CD4-positive, alpha-beta memory T cell (primary cell): ENCODE measurements at regions of chr21 and their contacts with region 1.

Region 1: DNA sequence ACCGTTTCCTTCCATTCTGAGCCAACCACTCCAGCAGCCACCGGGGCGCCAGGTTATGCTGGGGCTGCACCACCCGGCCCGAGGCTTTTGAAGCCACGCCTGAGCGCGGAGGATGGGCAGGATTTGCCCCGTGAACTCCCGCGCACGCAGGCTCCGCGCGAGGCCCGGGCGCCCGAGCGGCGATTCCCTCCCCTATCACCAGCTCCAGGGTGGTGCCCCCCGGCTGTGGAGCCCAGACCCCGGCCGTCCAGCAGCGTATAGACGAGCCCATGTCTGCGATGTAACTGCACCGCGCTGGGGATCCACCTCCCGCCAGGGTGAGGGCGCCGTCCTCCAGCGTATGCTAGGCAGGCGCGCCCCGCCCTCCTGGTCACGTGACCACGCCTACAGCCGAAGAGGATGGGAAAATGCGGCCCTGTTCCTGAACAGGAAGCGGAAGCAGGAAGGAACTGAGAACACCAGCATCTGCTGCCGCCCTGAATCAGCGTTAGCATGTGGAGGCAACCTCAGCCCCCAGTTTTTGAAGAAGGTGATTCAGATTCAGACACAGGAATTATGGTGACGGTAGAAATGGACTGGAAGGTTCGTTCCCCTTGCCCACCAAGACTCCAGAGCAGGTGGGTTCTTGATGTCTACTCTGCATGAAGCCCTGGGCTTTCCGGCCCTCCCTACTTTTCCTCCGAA is 46.0 kb downstream of the VPS26C start:
- DNase-seq: peak; percentile 86 to 95 (median 88)
- H3K4me3 ChIP-seq: peak overlapping the region; percentile 76 to 86
- H3K4me3 Mint-ChIP-seq: peak overlapping the region; percentile 79 to 96 (median 92)
- H3K27ac ChIP-seq: peak overlapping the region; percentile 75
- H3K27ac Mint-ChIP-seq: peak overlapping the region; percentile 80 to 96 (median 94)
- H3K4me1 ChIP-seq: peaks cover 45% of the 10 kb centered on the region
- H3K4me1 Mint-ChIP-seq: peaks cover 29 to 51% (median 36%) of the 10 kb centered on the region in 4 donors
- H3K27me3 ChIP-seq: no peaks in the 10 kb centered on the region
- H3K27me3 Mint-ChIP-seq: no peaks in the 10 kb centered on the region

Region 2: GRCh38 chr21:37072988-37073416 is 148.1 kb before region 1 on chr21 and contains the starts of genes PIGP and TTC3:
- CTCF ChIA-PET with region 1: no interaction called
- POLR2A ChIA-PET with region 1: no interaction called
- intact Hi-C with region 1: loop called (anchors 1 kb)
- DNase-seq: peak; percentile 93 to 97 (median 96)
- H3K4me3 ChIP-seq: peak within 1 kb of the TSS; percentile 83 to 91
- H3K4me3 Mint-ChIP-seq: peak within 1 kb of the TSS; percentile 95 to 100 (median 98)
- H3K27ac ChIP-seq: peak within 1 kb of the TSS; percentile 91
- H3K27ac Mint-ChIP-seq: peak within 1 kb of the TSS; percentile 92 to 100 (median 98)
- H3K4me1 ChIP-seq: peaks cover 36% of the 10 kb centered on the region
- H3K4me1 Mint-ChIP-seq: peaks cover 31 to 63% (median 44%) of the 10 kb centered on the region in 4 donors
- H3K27me3 ChIP-seq: no peaks in the 10 kb centered on the region
- H3K27me3 Mint-ChIP-seq: no peaks in the 10 kb centered on the region
- total RNA-seq, gene PIGP: 17.2 to 19.7 TPM
- total RNA-seq, gene TTC3: 163 to 171 TPM

Region 3: DNA sequence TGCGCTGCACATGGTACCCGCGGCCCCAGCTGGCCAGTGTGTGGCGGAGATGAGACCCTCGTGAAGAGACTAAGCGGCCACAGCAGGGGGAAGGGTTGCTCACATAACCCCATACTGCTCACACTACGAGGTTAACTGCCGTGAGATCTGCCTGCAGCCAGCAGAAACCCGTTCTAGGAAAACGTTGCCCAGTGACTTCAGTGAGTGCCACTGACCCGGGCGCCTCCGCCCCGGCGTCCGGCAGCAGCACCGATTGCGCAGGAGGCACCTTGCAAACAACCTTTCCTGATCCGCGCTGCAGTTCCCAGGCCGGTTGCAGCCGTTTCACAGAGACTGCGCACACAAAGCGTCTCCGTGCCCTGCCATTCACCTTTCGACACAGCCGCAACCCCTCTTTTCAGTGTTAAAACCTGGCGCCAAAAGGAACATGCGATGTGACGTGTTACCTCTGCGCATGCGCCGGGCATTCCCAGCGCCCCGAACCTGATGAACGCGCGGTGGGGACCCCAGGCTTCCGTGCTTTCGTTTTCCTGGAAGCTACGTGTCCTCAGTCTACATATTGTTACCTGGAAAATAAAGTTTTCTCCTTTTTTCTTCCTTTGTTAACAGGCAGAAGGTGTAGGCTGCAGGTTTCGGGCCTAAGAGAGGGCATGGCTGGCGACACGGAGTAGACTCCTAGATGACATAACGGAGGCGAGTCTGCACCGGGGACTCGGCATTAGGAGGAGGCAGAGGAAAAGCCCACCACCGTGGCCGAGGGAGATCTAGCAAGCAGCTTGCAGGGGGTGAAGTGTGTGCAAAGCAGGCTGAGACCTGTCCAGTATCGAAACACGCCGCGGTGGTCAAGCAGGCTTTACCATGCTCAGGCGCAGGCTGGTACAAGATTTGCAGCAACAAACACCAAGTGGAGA is 37.1 kb after region 1 on chr21:
- CTCF ChIA-PET with region 1: no interaction called
- POLR2A ChIA-PET with region 1: interaction called, 7 read pairs
- intact Hi-C with region 1: loop called (anchors 2 kb)
- DNase-seq: peak; percentile 73 to 87 (median 80)
- H3K4me3 ChIP-seq: peak overlapping the region; percentile 33 to 65
- H3K4me3 Mint-ChIP-seq: peak overlapping the region; percentile 87 to 95 (median 90)
- H3K27ac ChIP-seq: peak overlapping the region; percentile 74
- H3K27ac Mint-ChIP-seq: peak overlapping the region; percentile 84 to 97 (median 92)
- H3K4me1 ChIP-seq: peaks cover 26% of the 10 kb centered on the region
- H3K4me1 Mint-ChIP-seq: peaks cover 26 to 51% (median 35%) of the 10 kb centered on the region in 4 donors
- H3K27me3 ChIP-seq: no peaks in the 10 kb centered on the region
- H3K27me3 Mint-ChIP-seq: no peaks in the 10 kb centered on the region

Region 4: GRCh38 chr21:37267269-37268184 is 46.4 kb after region 1 on chr21 and contains the start of gene VPS26C:
- CTCF ChIA-PET with region 1: interaction called, 4 read pairs
- POLR2A ChIA-PET with region 1: interaction called, 36 read pairs
- intact Hi-C with region 1: loop called (anchors 1 kb)
- DNase-seq: peak; percentile 97 to 99 (median 99)
- H3K4me3 ChIP-seq: peak within 1 kb of the TSS; percentile 80 to 83
- H3K4me3 Mint-ChIP-seq: peak within 1 kb of the TSS; percentile 92 to 96 (median 94)
- H3K27ac ChIP-seq: peak within 1 kb of the TSS; percentile 92
- H3K27ac Mint-ChIP-seq: peak within 1 kb of the TSS; percentile 97 to 99 (median 98)
- H3K4me1 ChIP-seq: peaks cover 43% of the 10 kb centered on the region
- H3K4me1 Mint-ChIP-seq: peaks cover 33 to 64% (median 44%) of the 10 kb centered on the region in 4 donors
- H3K27me3 ChIP-seq: no peaks in the 10 kb centered on the region
- H3K27me3 Mint-ChIP-seq: peaks cover 0 to 4% of the 10 kb centered on the region in 2 donors
- total RNA-seq, gene VPS26C: 76.0 to 79.7 TPM

Region 5: DNA sequence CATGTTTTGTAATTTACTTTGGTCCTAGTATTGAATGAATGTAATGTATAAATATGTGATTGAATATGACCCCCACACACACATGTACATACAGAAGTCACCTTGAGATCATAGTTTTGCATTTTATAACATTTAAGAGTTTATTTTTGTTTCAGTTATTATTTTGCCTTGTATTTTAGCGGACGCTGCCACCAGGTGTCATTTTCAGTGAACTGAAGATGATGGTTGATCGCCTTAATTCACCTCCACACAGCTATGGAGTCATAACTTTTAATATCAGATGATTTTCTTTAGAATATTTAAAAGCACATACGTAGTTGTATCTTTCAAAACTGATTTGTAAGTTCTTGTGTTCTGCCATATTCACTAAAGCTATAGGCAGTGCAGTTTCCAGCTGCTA is 275.8 kb after region 1 on chr21:
- CTCF ChIA-PET with region 1: interaction called, 6 read pairs
- POLR2A ChIA-PET with region 1: interaction called, 3 read pairs
- intact Hi-C with region 1: loop called (anchors 2 kb)
- DNase-seq: no peak
- H3K4me3 ChIP-seq: no peak overlapping the region
- H3K4me3 Mint-ChIP-seq: no peak overlapping the region
- H3K27ac ChIP-seq: no peak overlapping the region
- H3K27ac Mint-ChIP-seq: peak overlapping the region in 2 of 7 donors; percentile 18 to 42
- H3K4me1 ChIP-seq: no peaks in the 10 kb centered on the region
- H3K4me1 Mint-ChIP-seq: peaks cover 18 to 33% (median 20%) of the 10 kb centered on the region in 4 donors
- H3K27me3 ChIP-seq: no peaks in the 10 kb centered on the region
- H3K27me3 Mint-ChIP-seq: no peaks in the 10 kb centered on the region

Region 6: GRCh38 chr21:37642493-37642892 is 421.4 kb after region 1 on chr21:
- CTCF ChIA-PET with region 1: no interaction called
- POLR2A ChIA-PET with region 1: no interaction called
- intact Hi-C with region 1: loop called (anchors 2 kb)
- DNase-seq: peak in 4 of 5 donors; percentile 12 to 32 (median 18)
- H3K4me3 ChIP-seq: no peak overlapping the region
- H3K4me3 Mint-ChIP-seq: no peak overlapping the region
- H3K27ac ChIP-seq: no peak overlapping the region
- H3K27ac Mint-ChIP-seq: peak overlapping the region in 1 of 7 donors; percentile 44
- H3K4me1 ChIP-seq: no peaks in the 10 kb centered on the region
- H3K4me1 Mint-ChIP-seq: peaks cover 0 to 9% (median 1%) of the 10 kb centered on the region in 4 donors
- H3K27me3 ChIP-seq: no peaks in the 10 kb centered on the region
- H3K27me3 Mint-ChIP-seq: peaks cover 24 to 46% of the 10 kb centered on the region in 2 donors